ENCODE measurements at regions of chr12 and their contacts with region 1.

Region 1: GRCh38 chr12:10771132-10771733 is 31.2 kb downstream of the TAS2R7 start:
- H3K4me3 Mint-ChIP-seq: no peak overlapping the region
- H3K27ac Mint-ChIP-seq: no peak overlapping the region
- H3K4me1 Mint-ChIP-seq: no peaks in the 10 kb centered on the region
- H3K27me3 Mint-ChIP-seq: peaks cover 10% of the 10 kb centered on the region

Region 2: GRCh38 chr12:10701131-10701681 is 70.0 kb before region 1 on chr12:
- intact Hi-C with region 1: no loop called
- H3K4me3 Mint-ChIP-seq: no peak overlapping the region
- H3K27ac Mint-ChIP-seq: no peak overlapping the region
- H3K4me1 Mint-ChIP-seq: no peaks in the 10 kb centered on the region
- H3K27me3 Mint-ChIP-seq: no peaks in the 10 kb centered on the region

Region 3: GRCh38 chr12:10794222-10794621 is 23.0 kb after region 1 on chr12:
- intact Hi-C with region 1: no loop called
- H3K4me3 Mint-ChIP-seq: no peak overlapping the region
- H3K27ac Mint-ChIP-seq: no peak overlapping the region
- H3K4me1 Mint-ChIP-seq: no peaks in the 10 kb centered on the region
- H3K27me3 Mint-ChIP-seq: peaks cover 2% of the 10 kb centered on the region

Region 4: GRCh38 chr12:11202811-11203210 is 431.6 kb after region 1 on chr12:
- intact Hi-C with region 1: loop called (anchors 1 kb)
- H3K4me3 Mint-ChIP-seq: no peak overlapping the region
- H3K27ac Mint-ChIP-seq: no peak overlapping the region
- H3K4me1 Mint-ChIP-seq: peaks cover 7% of the 10 kb centered on the region
- H3K27me3 Mint-ChIP-seq: no peaks in the 10 kb centered on the region

Region 5: DNA sequence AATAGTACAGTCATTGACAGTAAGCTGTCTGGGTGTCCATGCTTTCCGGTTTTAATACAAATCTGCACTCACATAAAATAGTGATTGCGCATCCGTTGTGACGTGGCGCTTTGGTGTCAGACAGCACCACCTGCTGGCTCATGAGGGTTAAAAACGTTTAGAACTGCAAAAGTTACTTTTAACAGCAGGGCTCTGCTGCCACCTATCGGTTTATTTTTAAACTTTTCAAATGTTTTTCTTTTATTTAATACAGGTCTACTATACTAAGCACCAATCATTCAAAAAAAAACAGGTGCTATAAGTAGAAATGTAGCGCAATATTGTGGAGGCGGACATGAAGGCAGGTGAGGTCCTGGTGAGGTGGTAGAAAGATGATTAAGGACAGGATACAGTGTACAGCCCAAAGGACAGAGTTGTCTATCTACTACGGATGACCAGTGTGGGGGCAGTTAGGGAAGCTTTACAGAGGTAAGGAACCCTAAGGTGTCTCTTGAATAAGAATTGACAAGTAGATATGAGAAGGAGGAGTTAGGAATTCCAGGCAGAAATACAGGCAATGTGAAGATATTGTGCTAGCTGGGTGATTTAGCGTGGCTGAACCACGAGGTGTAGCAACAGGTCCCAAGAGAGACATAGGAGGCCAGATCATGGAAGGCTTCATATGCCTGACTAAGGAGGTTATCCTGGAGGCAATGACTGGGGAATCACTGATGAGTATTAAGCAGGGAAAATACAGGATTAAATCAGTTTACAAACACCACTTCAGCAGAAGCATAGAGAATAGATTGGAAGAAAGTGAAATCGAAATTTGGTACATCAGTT is 715.6 kb after region 1 on chr12:
- intact Hi-C with region 1: loop called (anchors 1 kb)
- H3K4me3 Mint-ChIP-seq: no peak overlapping the region
- H3K27ac Mint-ChIP-seq: no peak overlapping the region
- H3K4me1 Mint-ChIP-seq: no peaks in the 10 kb centered on the region
- H3K27me3 Mint-ChIP-seq: peaks cover 3% of the 10 kb centered on the region

Region 6: DNA sequence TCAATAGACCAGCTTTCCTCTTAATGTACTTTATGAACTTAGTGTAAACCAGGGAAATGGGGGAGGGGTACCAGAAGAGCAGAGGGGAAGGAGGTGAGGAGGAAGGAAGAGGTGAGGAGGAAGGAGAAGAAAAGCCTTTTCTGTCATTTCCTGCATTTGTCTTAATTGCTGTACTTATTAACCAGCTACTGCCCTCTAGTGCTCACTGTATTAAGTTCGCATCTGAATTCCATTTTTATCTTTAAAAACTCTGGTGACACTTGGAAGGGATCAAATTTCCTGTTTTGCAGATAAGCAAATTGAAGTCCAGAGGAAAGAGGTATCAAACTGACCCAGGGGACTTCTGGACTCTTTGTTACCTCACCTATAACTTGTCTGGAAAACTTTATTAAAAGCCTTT is 1556.6 kb after region 1 on chr12:
- intact Hi-C with region 1: loop called (anchors 10 kb)
- H3K4me3 Mint-ChIP-seq: no peak overlapping the region
- H3K27ac Mint-ChIP-seq: no peak overlapping the region
- H3K4me1 Mint-ChIP-seq: peaks cover 7% of the 10 kb centered on the region
- H3K27me3 Mint-ChIP-seq: peaks cover 5% of the 10 kb centered on the region

Measured in dendritic cell treated with granulocyte-macrophage colony-stimulating factor and Interleukin-4, amounts not matched to agents 40 ng/mL and 50 ng/mL, for 4 days (primary cell).